ENCODE measurements at regions of chr2 and their contacts with region 1.

Region 1: DNA sequence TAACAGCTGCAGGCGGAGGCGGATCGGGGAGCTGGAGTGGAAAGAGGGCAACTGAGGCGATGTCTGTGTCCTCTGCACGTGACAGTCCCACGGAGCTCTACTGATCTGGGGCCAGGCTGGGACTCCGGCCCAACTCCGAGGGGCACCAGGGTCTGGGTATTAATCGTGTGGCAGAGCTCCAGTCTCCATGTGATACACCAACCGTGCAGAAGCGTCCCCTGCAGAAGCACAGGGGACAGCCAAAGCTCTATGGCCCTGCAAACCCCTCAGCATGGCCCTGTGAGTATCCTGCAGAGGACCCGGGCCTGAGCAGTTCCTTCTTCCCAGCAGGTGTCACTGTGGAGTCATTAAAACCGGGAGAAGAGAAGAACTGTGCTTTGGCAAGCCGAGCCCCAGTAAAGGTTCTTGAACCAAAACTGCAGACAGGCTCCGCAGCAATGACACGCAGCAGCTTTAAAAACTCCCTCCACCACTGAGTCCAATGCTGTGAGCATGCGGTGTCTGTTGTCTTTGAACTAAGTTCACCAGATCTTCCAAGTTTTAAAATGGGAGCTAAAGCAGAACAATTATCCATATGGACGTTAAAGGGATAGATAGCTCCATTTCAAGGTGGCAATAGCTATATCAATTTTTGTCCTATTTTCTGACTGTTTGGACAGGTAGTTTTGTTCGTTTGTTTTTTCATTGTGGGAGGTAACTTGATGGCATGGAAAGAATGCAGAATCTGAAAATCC is 79.4 kb downstream of the TMEM182 start:
- DNase-seq: peak; percentile 65
- H3K4me3 Mint-ChIP-seq: no peak overlapping the region
- H3K27ac Mint-ChIP-seq: no peak overlapping the region
- H3K4me1 Mint-ChIP-seq: no peaks in the 10 kb centered on the region
- H3K27me3 Mint-ChIP-seq: no peaks in the 10 kb centered on the region
- CTCF ChIP-seq: peak; percentile 55

Region 2: DNA sequence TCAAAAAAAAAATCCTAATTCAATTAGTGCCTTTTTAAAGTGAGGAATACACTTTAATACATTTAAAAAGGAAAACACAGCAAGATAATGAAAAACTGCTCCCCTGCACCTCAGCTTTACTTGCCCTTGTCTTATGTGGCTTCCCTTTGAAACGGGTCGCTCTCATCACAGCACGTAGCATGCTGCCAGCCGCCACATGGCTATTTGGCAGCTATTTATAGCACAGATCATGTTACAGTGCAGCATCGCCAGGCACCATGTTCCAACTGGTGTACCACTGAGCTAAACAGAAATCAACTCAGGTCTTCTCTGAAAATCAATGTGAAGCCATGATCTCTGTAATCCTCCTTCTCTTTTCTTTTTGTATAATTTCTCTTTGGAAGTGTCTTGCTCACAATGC is 14.4 kb before region 1 on chr2:
- CTCF ChIA-PET with region 1: interaction called, 25 read pairs
- POLR2A ChIA-PET with region 1: no interaction called
- intact Hi-C with region 1: no loop called
- DNase-seq: peak; percentile 48
- H3K4me3 Mint-ChIP-seq: no peak overlapping the region
- H3K27ac Mint-ChIP-seq: no peak overlapping the region
- H3K4me1 Mint-ChIP-seq: no peaks in the 10 kb centered on the region
- H3K27me3 Mint-ChIP-seq: no peaks in the 10 kb centered on the region
- CTCF ChIP-seq: no peak

Region 3: DNA sequence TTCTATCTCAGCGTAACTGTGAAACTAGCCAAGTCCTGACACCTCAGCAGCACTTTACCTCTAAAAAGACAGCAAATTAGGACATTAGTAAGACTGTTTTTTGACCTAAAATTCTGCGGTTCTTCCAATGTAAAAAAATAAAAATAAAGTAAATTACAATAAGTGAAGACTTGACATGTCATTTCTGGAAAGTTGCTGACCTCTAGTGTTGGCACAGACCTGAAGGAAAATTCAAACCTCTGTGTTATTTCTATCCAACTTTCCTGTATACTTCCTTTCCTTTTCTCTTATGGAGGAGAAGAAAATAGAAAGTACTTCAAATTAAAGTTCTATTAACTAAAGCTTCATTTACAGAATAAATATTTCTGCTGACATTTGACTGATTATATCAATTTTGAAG is 31.1 kb after region 1 on chr2:
- CTCF ChIA-PET with region 1: interaction called, 65 read pairs
- POLR2A ChIA-PET with region 1: no interaction called
- intact Hi-C with region 1: loop called (anchors 1 kb)
- DNase-seq: peak; percentile 6
- H3K4me3 Mint-ChIP-seq: no peak overlapping the region
- H3K27ac Mint-ChIP-seq: no peak overlapping the region
- H3K4me1 Mint-ChIP-seq: no peaks in the 10 kb centered on the region
- H3K27me3 Mint-ChIP-seq: no peaks in the 10 kb centered on the region
- CTCF ChIP-seq: peak; percentile 28

Region 4: GRCh38 chr2:102893870-102894269 is 52.6 kb after region 1 on chr2:
- CTCF ChIA-PET with region 1: interaction called, 10 read pairs
- POLR2A ChIA-PET with region 1: no interaction called
- intact Hi-C with region 1: no loop called
- DNase-seq: no peak
- H3K4me3 Mint-ChIP-seq: no peak overlapping the region
- H3K27ac Mint-ChIP-seq: no peak overlapping the region
- H3K4me1 Mint-ChIP-seq: peaks cover 15% of the 10 kb centered on the region
- H3K27me3 Mint-ChIP-seq: no peaks in the 10 kb centered on the region
- CTCF ChIP-seq: no peak

Region 5: GRCh38 chr2:102922321-102922720 is 81.0 kb after region 1 on chr2:
- CTCF ChIA-PET with region 1: interaction called, 11 read pairs
- POLR2A ChIA-PET with region 1: no interaction called
- intact Hi-C with region 1: no loop called
- DNase-seq: no peak
- H3K4me3 Mint-ChIP-seq: no peak overlapping the region
- H3K27ac Mint-ChIP-seq: no peak overlapping the region
- H3K4me1 Mint-ChIP-seq: peaks cover 8% of the 10 kb centered on the region
- H3K27me3 Mint-ChIP-seq: no peaks in the 10 kb centered on the region
- CTCF ChIP-seq: no peak

Region 6: DNA sequence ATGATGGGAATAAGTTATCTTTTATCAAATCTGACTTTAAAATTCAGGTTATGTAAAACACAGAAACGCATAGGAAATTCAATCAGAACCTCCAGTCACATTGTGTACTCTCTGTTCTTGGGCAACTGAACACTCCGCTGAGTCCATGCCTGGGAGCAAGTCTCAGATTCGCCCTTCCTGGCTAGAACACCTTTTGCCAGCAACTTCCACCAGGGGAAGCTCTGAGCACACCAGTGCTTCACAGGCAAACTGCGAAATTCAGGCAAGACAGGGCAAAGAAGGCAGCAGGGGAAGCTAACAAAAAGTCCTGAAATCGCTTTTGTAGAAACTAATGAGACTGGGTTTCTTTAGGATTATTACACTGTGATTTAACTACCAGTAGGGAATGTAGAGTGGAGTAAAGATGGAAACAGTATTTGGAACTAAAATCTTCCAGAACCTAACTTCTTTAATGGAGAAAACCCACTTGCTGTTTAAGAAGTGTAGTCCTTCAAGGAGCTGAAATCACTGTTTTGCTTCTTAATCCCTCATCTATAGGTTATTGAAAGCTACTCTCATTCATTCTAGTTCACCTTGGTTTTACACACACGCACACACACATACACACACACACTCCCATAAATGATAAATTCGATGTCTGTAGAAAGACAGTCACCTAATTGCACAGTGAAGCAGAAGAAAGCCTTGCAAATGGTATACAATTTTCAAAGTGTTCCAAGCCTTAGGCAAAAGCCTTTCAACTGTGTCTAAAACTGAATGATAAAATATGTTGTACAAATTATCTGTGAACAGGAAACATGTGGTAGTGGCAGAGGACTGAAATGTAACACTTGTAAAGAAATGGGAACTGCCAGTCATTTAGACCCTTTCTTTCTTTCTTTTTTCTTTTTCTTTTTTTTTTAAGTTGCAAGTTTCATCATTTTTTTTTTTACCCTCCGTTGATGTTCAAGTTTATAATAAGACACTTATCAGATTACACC is 135.0 kb after region 1 on chr2:
- CTCF ChIA-PET with region 1: interaction called, 13 read pairs
- POLR2A ChIA-PET with region 1: no interaction called
- intact Hi-C with region 1: loop called (anchors 2 kb)
- DNase-seq: peak; percentile 78
- H3K4me3 Mint-ChIP-seq: no peak overlapping the region
- H3K27ac Mint-ChIP-seq: no peak overlapping the region
- H3K4me1 Mint-ChIP-seq: peaks cover 7% of the 10 kb centered on the region
- H3K27me3 Mint-ChIP-seq: no peaks in the 10 kb centered on the region
- CTCF ChIP-seq: peak; percentile 79

Region 7: DNA sequence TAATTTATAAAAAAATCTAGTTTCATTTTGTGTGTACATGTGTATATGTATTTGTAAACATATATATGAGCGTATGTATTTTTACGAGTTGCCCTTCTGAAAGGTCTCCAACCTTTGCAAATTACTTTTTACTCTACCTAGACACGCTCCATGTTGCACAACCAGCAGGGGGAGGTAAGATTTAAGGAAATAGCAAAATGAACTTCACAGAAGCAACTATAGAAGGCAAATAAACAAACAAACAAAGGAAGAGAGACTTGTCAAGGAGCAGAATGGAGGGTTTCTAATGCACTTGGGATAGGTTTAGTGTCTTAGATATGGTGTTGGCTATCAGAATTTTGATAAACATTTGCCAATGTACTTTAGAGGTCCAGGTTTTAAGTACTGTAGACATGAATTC is 1192.1 kb after region 1 on chr2:
- CTCF ChIA-PET with region 1: no interaction called
- POLR2A ChIA-PET with region 1: no interaction called
- intact Hi-C with region 1: loop called (anchors 10 kb)
- DNase-seq: peak; percentile 30
- H3K4me3 Mint-ChIP-seq: no peak overlapping the region
- H3K27ac Mint-ChIP-seq: no peak overlapping the region
- H3K4me1 Mint-ChIP-seq: no peaks in the 10 kb centered on the region
- H3K27me3 Mint-ChIP-seq: peaks cover 86% of the 10 kb centered on the region
- CTCF ChIP-seq: peak; percentile 28